Calu3 (cell line): ENCODE measurements at regions of chr11 and their contacts with region 1.

Region 1: DNA sequence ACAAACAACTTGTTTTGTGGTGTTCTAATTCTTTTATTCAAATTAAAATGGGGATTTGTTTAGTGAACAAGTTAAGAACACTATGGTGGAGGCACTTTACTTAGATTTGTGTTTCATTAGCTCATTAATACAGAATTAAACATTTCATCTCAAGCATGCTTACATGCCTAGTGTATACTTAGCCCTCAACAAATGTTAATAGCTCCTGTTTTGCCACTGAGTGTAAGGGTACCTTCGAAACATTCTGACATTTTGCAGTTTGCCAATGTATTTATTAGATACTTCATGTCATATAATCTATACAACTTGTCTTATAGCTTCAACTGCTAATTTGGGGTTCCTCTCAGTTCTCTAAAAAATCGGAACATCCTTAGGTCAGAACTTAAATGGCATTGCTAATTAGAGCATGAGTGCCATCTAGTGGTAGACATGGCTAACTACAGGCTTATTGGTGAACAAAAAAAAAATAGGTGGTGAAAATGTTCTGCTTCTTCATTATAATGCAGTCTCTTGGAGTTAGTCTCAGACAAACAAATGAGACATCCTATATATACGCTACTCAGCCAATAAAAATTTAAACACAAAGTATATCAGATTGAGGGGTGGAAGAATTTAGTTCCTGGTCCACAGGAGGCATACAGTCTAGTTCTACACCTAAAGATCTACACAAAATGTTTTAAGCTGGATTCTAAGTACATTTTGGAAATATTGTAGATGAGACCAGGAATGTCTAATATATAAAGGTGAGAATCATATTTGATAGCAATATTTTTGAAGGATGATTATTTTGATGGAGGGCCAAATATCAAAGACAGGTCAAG is 4.9 kb upstream of the CNTN5 start:
- DNase-seq: no peak
- H3K4me3 Mint-ChIP-seq: no peak overlapping the region
- H3K27ac Mint-ChIP-seq: no peak overlapping the region
- H3K4me1 Mint-ChIP-seq: no peaks in the 10 kb centered on the region
- H3K27me3 Mint-ChIP-seq: peaks cover 20% of the 10 kb centered on the region
- CTCF ChIP-seq: peak; percentile 63

Region 2: DNA sequence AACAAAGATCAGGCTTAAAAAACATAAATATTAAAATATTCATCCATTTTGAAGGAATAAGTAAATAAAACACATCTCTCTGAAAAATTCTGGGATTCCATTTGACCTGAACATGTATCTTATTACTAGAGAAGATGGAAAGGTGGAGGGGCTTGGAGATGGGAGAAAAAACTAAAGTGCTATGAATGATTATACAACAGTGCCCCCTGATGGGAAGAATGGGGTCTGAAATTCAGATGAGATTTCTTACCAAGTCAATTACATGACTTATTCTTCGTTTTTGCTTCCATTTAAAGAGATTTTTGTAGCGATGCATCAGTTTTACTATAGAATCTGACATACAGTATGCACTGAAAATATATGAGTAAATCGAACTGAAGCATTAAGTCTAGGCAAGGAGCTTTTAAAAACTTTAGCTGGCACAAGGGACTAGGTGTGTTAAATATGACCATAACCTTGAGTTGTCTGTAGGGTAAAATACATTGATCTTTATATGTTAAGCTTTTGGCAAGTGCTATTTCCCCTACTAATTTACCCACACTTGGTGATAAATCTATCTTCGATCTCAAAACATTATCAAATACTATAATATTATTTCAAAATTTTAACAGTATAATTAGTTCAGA is 723.7 kb after region 1 on chr11:
- CTCF ChIA-PET with region 1: no interaction called
- intact Hi-C with region 1: loop called (anchors 5 kb)
- DNase-seq: peak; percentile 21
- H3K4me3 Mint-ChIP-seq: no peak overlapping the region
- H3K27ac Mint-ChIP-seq: no peak overlapping the region
- H3K4me1 Mint-ChIP-seq: no peaks in the 10 kb centered on the region
- H3K27me3 Mint-ChIP-seq: no peaks in the 10 kb centered on the region
- CTCF ChIP-seq: no peak